ENCODE measurements at regions of chr5 and their contacts with region 1.

Region 1: DNA sequence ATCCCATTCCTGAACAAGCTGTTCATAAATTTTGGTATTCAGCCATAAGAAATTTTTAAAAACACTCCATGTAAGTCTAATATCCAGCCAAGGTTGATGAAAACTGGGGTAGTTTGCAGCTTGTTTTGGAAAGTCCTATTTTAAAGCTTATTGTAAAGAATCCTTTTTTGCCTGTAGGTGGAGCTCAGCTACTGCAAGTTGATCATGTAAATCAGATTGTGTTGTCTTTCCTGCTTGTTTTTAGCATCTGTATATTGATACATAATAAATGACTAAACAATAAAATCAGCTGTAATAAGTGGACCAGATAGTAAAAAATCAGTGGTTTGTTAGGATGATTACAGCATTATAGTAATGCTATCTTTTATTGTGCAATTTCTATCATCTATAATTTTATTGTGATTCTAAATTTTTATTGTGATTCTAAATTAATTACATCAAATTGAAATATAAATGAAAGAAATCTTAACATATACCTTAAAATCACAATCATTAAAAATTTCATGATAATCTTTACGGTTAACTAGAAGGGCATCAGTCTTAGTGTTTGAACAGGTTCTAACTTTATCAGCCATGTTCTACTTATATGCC is 42.4 kb downstream of the CWC27 start:
- DNase-seq: peak in 6 of 35 experiments; percentile 0 to 61 (median 4)
- ATAC-seq: no peak
- H3K4me3 ChIP-seq: no peak overlapping the region
- H3K4me3 Mint-ChIP-seq: no peak overlapping the region
- H3K27ac ChIP-seq: no peak overlapping the region
- H3K27ac Mint-ChIP-seq: no peak overlapping the region
- H3K4me1 ChIP-seq: no peaks in the 10 kb centered on the region
- H3K4me1 Mint-ChIP-seq: no peaks in the 10 kb centered on the region
- H3K27me3 ChIP-seq: no peaks in the 10 kb centered on the region
- H3K27me3 Mint-ChIP-seq: no peaks in the 10 kb centered on the region

Region 2: GRCh38 chr5:64557911-64558310 is 253.2 kb before region 1 on chr5:
- CTCF ChIA-PET with region 1: no interaction called
- POLR2A ChIA-PET with region 1: no interaction called
- DNase-seq: no peak
- ATAC-seq: no peak
- H3K4me3 ChIP-seq: no peak overlapping the region
- H3K4me3 Mint-ChIP-seq: no peak overlapping the region
- H3K27ac ChIP-seq: no peak overlapping the region
- H3K27ac Mint-ChIP-seq: no peak overlapping the region
- H3K4me1 ChIP-seq: no peaks in the 10 kb centered on the region
- H3K4me1 Mint-ChIP-seq: no peaks in the 10 kb centered on the region
- H3K27me3 ChIP-seq: no peaks in the 10 kb centered on the region
- H3K27me3 Mint-ChIP-seq: peaks cover 4 to 16% of the 10 kb centered on the region in 2 donors

Region 3: GRCh38 chr5:64861281-64861680 is 50.1 kb after region 1 on chr5:
- CTCF ChIA-PET with region 1: no interaction called
- POLR2A ChIA-PET with region 1: no interaction called
- DNase-seq: no peak
- ATAC-seq: no peak
- H3K4me3 ChIP-seq: no peak overlapping the region
- H3K4me3 Mint-ChIP-seq: no peak overlapping the region
- H3K27ac ChIP-seq: no peak overlapping the region
- H3K27ac Mint-ChIP-seq: no peak overlapping the region
- H3K4me1 ChIP-seq: no peaks in the 10 kb centered on the region
- H3K4me1 Mint-ChIP-seq: no peaks in the 10 kb centered on the region
- H3K27me3 ChIP-seq: no peaks in the 10 kb centered on the region
- H3K27me3 Mint-ChIP-seq: no peaks in the 10 kb centered on the region

Region 4: GRCh38 chr5:64923151-64923685 is 112.1 kb after region 1 on chr5:
- CTCF ChIA-PET with region 1: no interaction called
- POLR2A ChIA-PET with region 1: no interaction called
- DNase-seq: no peak
- ATAC-seq: no peak
- H3K4me3 ChIP-seq: no peak overlapping the region
- H3K4me3 Mint-ChIP-seq: no peak overlapping the region
- H3K27ac ChIP-seq: no peak overlapping the region
- H3K27ac Mint-ChIP-seq: no peak overlapping the region
- H3K4me1 ChIP-seq: peaks cover 0 to 4% of the 10 kb centered on the region in 2 experiments
- H3K4me1 Mint-ChIP-seq: peaks cover 9 to 19% (median 9%) of the 10 kb centered on the region in 3 donors
- H3K27me3 ChIP-seq: no peaks in the 10 kb centered on the region
- H3K27me3 Mint-ChIP-seq: no peaks in the 10 kb centered on the region

Region 5: GRCh38 chr5:65451436-65451835 is 640.3 kb after region 1 on chr5:
- CTCF ChIA-PET with region 1: no interaction called
- POLR2A ChIA-PET with region 1: no interaction called
- DNase-seq: no peak
- ATAC-seq: no peak
- H3K4me3 ChIP-seq: no peak overlapping the region
- H3K4me3 Mint-ChIP-seq: no peak overlapping the region
- H3K27ac ChIP-seq: no peak overlapping the region
- H3K27ac Mint-ChIP-seq: no peak overlapping the region
- H3K4me1 ChIP-seq: no peaks in the 10 kb centered on the region
- H3K4me1 Mint-ChIP-seq: no peaks in the 10 kb centered on the region
- H3K27me3 ChIP-seq: no peaks in the 10 kb centered on the region
- H3K27me3 Mint-ChIP-seq: no peaks in the 10 kb centered on the region

Region 6: GRCh38 chr5:65961633-65962032 is 1150.5 kb after region 1 on chr5:
- CTCF ChIA-PET with region 1: interaction called in 1 of 2 experiments, 10 read pairs
- POLR2A ChIA-PET with region 1: no interaction called
- DNase-seq: no peak
- ATAC-seq: peak in 3 of 4 experiments; percentile 41 to 44 (median 43)
- H3K4me3 ChIP-seq: no peak overlapping the region
- H3K4me3 Mint-ChIP-seq: peak overlapping the region in 1 of 3 donors; percentile 0
- H3K27ac ChIP-seq: no peak overlapping the region
- H3K27ac Mint-ChIP-seq: peak overlapping the region; percentile 7 to 64
- H3K4me1 ChIP-seq: peaks cover 13 to 29% of the 10 kb centered on the region in 2 experiments
- H3K4me1 Mint-ChIP-seq: peaks cover 73 to 78% (median 78%) of the 10 kb centered on the region in 3 donors
- H3K27me3 ChIP-seq: no peaks in the 10 kb centered on the region
- H3K27me3 Mint-ChIP-seq: no peaks in the 10 kb centered on the region